AG04449 (cell line): ENCODE measurements at regions of chr11 and their contacts with region 1.

Region 1: GRCh38 chr11:77619576-77620198 is 17.9 kb downstream of the CLNS1A start:
- DNase-seq: no peak
- H3K4me3 ChIP-seq: no peak overlapping the region
- CTCF ChIP-seq: peak; percentile 57

Region 2: GRCh38 chr11:77198440-77198849 is 421.2 kb before region 1 on chr11:
- CTCF ChIA-PET with region 1: interaction called, 44 read pairs
- POLR2A ChIA-PET with region 1: no interaction called
- DNase-seq: no peak
- H3K4me3 ChIP-seq: no peak overlapping the region
- CTCF ChIP-seq: peak; percentile 12

Region 3: DNA sequence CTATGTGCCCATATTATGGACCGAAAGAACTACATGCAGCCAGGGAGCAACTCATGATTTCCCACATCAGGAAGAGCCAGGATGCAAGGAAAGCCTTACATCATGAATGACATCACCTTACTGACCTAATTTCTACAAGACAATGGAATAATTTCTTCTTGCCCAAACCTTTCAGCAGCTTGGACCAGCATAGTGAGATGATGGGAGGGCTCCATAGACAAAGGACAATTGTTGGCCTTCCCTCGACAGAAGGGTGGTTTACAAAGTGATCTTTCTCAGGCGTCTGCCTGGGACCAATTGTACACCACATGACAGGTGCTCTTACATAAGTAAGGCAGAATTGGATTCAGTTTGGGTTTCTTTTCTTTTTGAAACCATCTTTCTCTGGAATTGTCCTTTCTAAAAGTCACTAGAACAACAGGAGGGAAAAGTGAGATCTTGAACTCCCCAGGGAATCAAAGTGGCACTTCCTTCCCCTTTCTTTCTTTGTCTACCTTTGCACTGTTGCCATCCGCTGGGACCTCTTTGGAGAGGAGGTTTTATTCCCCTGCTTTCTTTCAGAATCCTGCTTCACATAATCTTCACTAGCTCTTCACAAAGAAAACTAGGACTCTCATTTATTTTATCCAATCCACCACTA is 94.1 kb before region 1 on chr11:
- CTCF ChIA-PET with region 1: no interaction called
- POLR2A ChIA-PET with region 1: no interaction called
- DNase-seq: no peak
- H3K4me3 ChIP-seq: no peak overlapping the region
- CTCF ChIP-seq: no peak

Region 4: GRCh38 chr11:77547863-77548551 is 71.7 kb before region 1 on chr11:
- CTCF ChIA-PET with region 1: interaction called, 17 read pairs
- POLR2A ChIA-PET with region 1: no interaction called
- DNase-seq: peak; percentile 21
- H3K4me3 ChIP-seq: no peak overlapping the region
- CTCF ChIP-seq: peak; percentile 38

Region 5: DNA sequence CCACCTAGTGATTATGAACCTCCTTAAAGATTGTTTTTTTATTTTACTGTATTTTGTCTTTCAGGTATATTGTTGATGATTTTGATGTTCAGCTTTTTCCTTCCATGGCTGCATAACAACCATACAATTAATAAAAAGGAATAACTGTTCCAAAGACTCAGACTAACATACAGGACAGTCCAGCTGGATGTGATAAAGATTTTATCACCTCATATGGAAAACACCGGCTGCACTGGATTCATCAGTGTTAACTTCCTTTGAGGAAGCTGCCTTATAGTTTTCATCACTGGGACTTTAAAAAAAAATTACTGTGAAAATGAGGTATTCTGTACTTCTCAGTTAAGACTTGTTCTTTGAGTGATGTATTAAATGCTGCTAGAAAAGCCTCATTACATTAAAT is 10.5 kb before region 1 on chr11:
- CTCF ChIA-PET with region 1: interaction called, 23 read pairs
- POLR2A ChIA-PET with region 1: no interaction called
- DNase-seq: no peak
- H3K4me3 ChIP-seq: no peak overlapping the region
- CTCF ChIP-seq: no peak

Region 6: GRCh38 chr11:77677138-77677537 is 57.5 kb after region 1 on chr11:
- CTCF ChIA-PET with region 1: no interaction called
- POLR2A ChIA-PET with region 1: no interaction called
- DNase-seq: no peak
- H3K4me3 ChIP-seq: no peak overlapping the region
- CTCF ChIP-seq: no peak

Region 7: DNA sequence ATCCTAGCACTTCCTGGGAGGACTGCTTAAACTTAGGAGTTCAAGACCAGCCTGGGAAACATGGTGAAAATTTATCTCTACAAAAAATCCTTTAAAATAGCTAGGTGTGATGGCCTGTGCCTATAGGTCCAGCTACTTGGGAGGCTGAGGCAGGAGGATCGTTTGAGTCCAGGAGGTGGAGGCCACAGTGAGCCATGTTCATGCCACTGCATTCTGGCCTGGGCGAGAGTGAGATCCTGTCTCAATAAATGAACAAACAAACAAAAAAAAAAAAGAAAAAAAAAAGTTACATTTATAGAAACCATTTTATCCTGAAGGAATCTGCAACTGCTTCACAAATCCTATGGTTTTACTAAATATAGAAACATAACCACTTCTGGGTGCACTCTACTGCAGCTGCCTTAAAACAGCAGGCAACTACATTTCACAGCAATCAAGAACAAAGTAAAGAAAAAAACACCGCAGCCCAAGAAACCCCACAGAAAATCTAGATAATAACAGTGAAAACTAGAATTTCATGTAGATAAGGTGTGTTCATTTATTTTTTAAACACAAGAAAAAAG is 873.8 kb after region 1 on chr11:
- CTCF ChIA-PET with region 1: no interaction called
- POLR2A ChIA-PET with region 1: no interaction called
- DNase-seq: no peak
- H3K4me3 ChIP-seq: no peak overlapping the region
- CTCF ChIP-seq: no peak